CD8-positive, alpha-beta memory T cell (primary cell): ENCODE measurements at regions of chr15 and their contacts with region 1.

Region 1: GRCh38 chr15:80776420-80777045 is 2.6 kb upstream of the CEMIP start:
- DNase-seq: peak; percentile 25 to 67 (median 47)
- H3K4me3 ChIP-seq: no peak overlapping the region
- H3K4me3 Mint-ChIP-seq: no peak overlapping the region
- H3K27ac ChIP-seq: no peak overlapping the region
- H3K27ac Mint-ChIP-seq: no peak overlapping the region
- H3K4me1 ChIP-seq: no peaks in the 10 kb centered on the region
- H3K4me1 Mint-ChIP-seq: peaks cover 3 to 9% (median 9%) of the 10 kb centered on the region in 3 donors
- H3K27me3 ChIP-seq: peaks cover 24% of the 10 kb centered on the region
- H3K27me3 Mint-ChIP-seq: peaks cover 35 to 38% of the 10 kb centered on the region in 2 donors

Region 2: GRCh38 chr15:80455668-80456442 is 320.7 kb before region 1 on chr15:
- CTCF ChIA-PET with region 1: interaction called, 51 read pairs
- POLR2A ChIA-PET with region 1: no interaction called
- DNase-seq: peak; percentile 24 to 60 (median 36)
- H3K4me3 ChIP-seq: no peak overlapping the region
- H3K4me3 Mint-ChIP-seq: no peak overlapping the region
- H3K27ac ChIP-seq: no peak overlapping the region
- H3K27ac Mint-ChIP-seq: no peak overlapping the region
- H3K4me1 ChIP-seq: no peaks in the 10 kb centered on the region
- H3K4me1 Mint-ChIP-seq: peaks cover 4 to 9% (median 5%) of the 10 kb centered on the region in 3 donors
- H3K27me3 ChIP-seq: no peaks in the 10 kb centered on the region
- H3K27me3 Mint-ChIP-seq: peaks cover 3 to 28% of the 10 kb centered on the region in 2 donors

Region 3: DNA sequence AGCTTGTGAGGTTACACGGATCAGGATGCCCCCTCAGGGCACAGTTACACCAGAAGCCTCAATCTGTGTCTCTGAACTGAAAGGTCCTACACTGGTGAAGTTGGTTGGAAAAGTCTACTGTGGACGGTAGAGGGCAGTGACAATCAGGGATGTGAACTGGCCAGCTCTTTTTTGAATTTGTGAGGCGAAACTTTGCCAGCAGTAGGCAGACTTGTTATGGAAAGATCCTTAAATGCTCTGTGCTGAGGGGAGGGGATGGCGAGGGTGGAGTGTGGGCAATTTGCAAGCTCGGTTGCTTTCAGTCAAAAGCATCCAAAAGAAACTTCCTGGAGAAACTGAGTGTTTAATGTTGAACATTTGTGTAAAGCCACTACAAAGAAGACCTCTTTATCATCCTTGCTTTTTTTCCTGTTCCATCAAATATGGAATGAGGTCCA is 208.8 kb before region 1 on chr15:
- CTCF ChIA-PET with region 1: interaction called, 22 read pairs
- POLR2A ChIA-PET with region 1: no interaction called
- DNase-seq: peak in 1 of 5 donors; percentile 3
- H3K4me3 ChIP-seq: no peak overlapping the region
- H3K4me3 Mint-ChIP-seq: no peak overlapping the region
- H3K27ac ChIP-seq: no peak overlapping the region
- H3K27ac Mint-ChIP-seq: peak overlapping the region in 1 of 8 donors; percentile 0
- H3K4me1 ChIP-seq: no peaks in the 10 kb centered on the region
- H3K4me1 Mint-ChIP-seq: no peaks in the 10 kb centered on the region
- H3K27me3 ChIP-seq: peaks cover 3% of the 10 kb centered on the region
- H3K27me3 Mint-ChIP-seq: peaks cover 16 to 40% of the 10 kb centered on the region in 2 donors

Region 4: GRCh38 chr15:80788536-80788935 is 12.0 kb after region 1 on chr15:
- CTCF ChIA-PET with region 1: interaction called, 10 read pairs
- POLR2A ChIA-PET with region 1: no interaction called
- DNase-seq: no peak
- H3K4me3 ChIP-seq: no peak overlapping the region
- H3K4me3 Mint-ChIP-seq: no peak overlapping the region
- H3K27ac ChIP-seq: no peak overlapping the region
- H3K27ac Mint-ChIP-seq: no peak overlapping the region
- H3K4me1 ChIP-seq: no peaks in the 10 kb centered on the region
- H3K4me1 Mint-ChIP-seq: peaks cover 0 to 3% (median 2%) of the 10 kb centered on the region in 3 donors
- H3K27me3 ChIP-seq: no peaks in the 10 kb centered on the region
- H3K27me3 Mint-ChIP-seq: peaks cover 5 to 22% of the 10 kb centered on the region in 2 donors